Activated naive CD4-positive, alpha-beta T cell treated with anti-CD3 and anti-CD28 coated beads for 36 hours (primary cell): ENCODE measurements at regions of chr3 and their contacts with region 1.

Region 1: GRCh38 chr3:143644370-143645089 is 203.7 kb downstream of the SLC9A9 start:
- DNase-seq: peak; percentile 48
- H3K4me3 Mint-ChIP-seq: no peak overlapping the region
- H3K27ac Mint-ChIP-seq: no peak overlapping the region
- H3K4me1 Mint-ChIP-seq: no peaks in the 10 kb centered on the region
- H3K27me3 Mint-ChIP-seq: no peaks in the 10 kb centered on the region

Region 2: DNA sequence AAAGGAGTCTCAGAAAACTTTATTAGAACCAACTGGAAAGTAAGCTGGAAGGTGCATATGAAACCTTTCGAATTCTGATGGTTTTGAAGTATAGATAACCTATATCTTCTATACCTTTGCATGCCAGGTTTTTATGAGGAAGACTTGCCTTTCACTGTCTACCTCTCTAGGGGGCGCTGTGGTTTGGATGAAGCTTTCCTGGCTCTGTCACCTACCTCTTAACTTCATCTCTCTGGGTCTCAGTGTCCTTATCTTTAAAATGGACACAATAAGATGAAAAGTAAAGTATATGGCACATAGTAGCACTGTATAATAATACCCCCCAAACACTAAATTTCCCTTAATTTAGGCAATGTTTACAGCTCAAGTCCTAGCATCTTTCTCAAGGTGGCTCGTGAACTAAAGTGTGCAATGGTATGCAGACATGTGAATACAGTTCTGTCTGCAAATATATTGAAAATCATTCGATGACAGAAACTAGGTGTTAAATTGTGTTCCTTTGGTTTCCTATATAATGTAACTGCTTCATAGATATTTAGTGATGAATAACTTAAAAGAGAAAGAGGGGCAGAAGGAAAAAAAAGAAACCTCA is 210.6 kb before region 1 on chr3:
- CTCF ChIA-PET with region 1: no interaction called
- intact Hi-C with region 1: loop called (anchors 1 kb)
- DNase-seq: peak; percentile 64
- H3K4me3 Mint-ChIP-seq: no peak overlapping the region
- H3K27ac Mint-ChIP-seq: no peak overlapping the region
- H3K4me1 Mint-ChIP-seq: no peaks in the 10 kb centered on the region
- H3K27me3 Mint-ChIP-seq: no peaks in the 10 kb centered on the region